ENCODE measurements at regions of chr15 and their contacts with region 1.

Region 1: GRCh38 chr15:64667736-64668161 is 107.6 kb downstream of the RBPMS2 start:
- DNase-seq: no peak
- H3K4me3 ChIP-seq: no peak overlapping the region
- H3K27ac ChIP-seq: no peak overlapping the region
- H3K4me1 ChIP-seq: no peaks in the 10 kb centered on the region
- H3K27me3 ChIP-seq: no peaks in the 10 kb centered on the region
- CTCF ChIP-seq: no peak

Region 2: DNA sequence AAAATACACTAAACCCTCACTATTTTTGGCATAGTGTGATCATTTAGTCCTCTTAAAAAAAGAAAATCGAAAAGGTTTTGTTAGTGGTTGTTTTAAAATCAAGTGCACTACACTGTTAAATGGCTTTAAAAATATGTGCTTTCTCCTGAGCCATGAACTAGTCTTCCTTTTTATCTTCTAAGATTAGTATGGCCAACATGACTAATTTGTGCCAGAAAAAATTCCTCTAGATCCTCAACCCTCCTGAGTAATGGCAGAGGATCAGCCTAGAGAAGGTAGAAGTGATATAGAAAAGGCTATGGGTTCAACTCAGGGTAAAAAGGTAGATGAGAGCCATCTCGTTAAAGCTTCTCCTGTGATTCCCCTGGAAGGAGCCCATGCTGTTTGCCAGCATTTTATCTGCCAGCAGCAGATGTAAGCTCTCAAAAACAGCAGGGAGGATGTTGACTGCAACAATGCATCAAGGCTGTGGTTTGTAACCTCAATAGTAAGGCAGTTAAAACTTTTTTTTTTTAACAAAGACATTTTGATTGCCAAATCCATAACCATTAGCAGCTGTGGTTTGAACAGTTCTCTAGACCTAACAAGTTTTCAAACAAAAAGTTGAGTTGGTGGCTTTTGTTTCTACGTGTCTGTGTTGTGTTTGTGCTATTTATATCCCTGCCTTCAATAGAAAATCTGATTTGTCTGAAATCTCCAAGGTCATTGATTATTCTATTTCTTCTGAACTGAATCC is 237.6 kb before region 1 on chr15:
- intact Hi-C with region 1: loop called (anchors 10 kb)
- DNase-seq: no peak
- H3K4me3 ChIP-seq: no peak overlapping the region
- H3K27ac ChIP-seq: no peak overlapping the region
- H3K4me1 ChIP-seq: peaks cover 0 to 4% (median 2%) of the 10 kb centered on the region in 4 donors
- H3K27me3 ChIP-seq: no peaks in the 10 kb centered on the region
- CTCF ChIP-seq: no peak

Region 3: GRCh38 chr15:64634576-64635498 is 32.9 kb before region 1 on chr15:
- intact Hi-C with region 1: no loop called
- DNase-seq: no peak
- H3K4me3 ChIP-seq: no peak overlapping the region
- H3K27ac ChIP-seq: no peak overlapping the region
- H3K4me1 ChIP-seq: peaks cover 0 to 29% (median 11%) of the 10 kb centered on the region in 4 donors
- H3K27me3 ChIP-seq: no peaks in the 10 kb centered on the region
- CTCF ChIP-seq: no peak